BJ (cell line): ENCODE measurements at regions of chr4 and their contacts with region 1.

Region 1: DNA sequence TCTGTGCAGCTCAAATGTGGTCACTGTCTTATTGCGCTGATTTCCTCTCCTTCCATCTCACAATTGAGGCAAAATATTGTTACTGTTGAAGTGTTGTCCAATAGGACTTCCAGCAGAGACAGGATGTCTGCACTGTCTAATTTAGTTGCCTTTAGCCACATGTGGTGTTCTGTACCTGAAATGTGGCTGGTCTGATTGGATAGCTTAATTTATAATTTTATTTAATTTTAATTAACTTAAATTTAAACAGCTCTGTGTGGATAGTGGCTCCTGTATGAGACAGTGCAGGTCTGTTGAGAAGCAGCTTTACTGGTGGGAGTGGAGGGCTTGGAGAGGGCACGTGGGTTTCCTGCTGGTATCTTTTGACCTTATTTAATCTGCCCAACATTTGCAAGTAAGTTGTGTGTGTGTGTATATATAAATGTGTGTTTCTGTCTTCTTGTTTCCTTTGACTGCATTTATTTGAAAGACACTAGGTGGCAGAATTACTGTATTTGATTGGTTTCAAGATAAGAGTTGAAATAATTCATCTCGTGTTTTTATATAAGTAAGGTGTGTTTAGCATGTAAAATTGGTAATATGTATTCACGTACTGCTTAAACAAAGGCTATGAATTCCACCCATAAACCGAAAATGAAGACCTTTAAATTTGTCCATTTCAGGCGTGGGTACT is 55.3 kb upstream of the MSANTD1 start:
- DNase-seq: no peak
- H3K4me3 ChIP-seq: no peak overlapping the region
- H3K27me3 ChIP-seq: no peaks in the 10 kb centered on the region
- CTCF ChIP-seq: peak; percentile 33; the same call in 1 of the 2 replicates

Region 2: GRCh38 chr4:3176367-3177229 is 17.1 kb before region 1 on chr4:
- CTCF ChIA-PET with region 1: interaction called, 13 read pairs
- POLR2A ChIA-PET with region 1: no interaction called
- DNase-seq: no peak
- H3K4me3 ChIP-seq: no peak overlapping the region
- H3K27me3 ChIP-seq: no peaks in the 10 kb centered on the region
- CTCF ChIP-seq: no peak

Region 3: DNA sequence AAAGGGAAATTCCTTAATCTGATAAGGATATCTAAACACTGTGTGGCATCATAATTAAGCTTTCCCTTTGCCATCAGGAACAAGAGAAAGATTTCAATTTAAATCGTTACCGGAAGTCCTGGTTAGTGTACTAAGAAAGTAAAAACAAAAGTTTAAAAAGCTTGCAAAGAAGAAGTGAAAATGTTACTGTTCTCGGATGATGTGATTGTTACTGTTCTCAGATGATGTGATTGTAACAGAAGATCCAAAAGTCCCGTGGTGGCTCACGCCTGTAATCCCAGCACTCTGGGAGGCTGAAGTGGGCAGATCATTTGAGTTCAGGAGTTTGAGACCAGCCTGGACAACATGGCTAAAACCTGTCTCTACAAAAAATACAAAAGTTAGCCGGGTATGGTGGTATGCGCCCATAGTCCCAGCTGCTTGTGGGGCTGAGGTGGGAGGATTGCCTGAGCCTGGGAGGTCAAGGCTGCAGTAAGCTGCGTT is 161.6 kb after region 1 on chr4:
- CTCF ChIA-PET with region 1: no interaction called
- POLR2A ChIA-PET with region 1: no interaction called
- DNase-seq: no peak
- H3K4me3 ChIP-seq: no peak overlapping the region
- H3K27me3 ChIP-seq: no peaks in the 10 kb centered on the region
- CTCF ChIP-seq: no peak

Region 4: DNA sequence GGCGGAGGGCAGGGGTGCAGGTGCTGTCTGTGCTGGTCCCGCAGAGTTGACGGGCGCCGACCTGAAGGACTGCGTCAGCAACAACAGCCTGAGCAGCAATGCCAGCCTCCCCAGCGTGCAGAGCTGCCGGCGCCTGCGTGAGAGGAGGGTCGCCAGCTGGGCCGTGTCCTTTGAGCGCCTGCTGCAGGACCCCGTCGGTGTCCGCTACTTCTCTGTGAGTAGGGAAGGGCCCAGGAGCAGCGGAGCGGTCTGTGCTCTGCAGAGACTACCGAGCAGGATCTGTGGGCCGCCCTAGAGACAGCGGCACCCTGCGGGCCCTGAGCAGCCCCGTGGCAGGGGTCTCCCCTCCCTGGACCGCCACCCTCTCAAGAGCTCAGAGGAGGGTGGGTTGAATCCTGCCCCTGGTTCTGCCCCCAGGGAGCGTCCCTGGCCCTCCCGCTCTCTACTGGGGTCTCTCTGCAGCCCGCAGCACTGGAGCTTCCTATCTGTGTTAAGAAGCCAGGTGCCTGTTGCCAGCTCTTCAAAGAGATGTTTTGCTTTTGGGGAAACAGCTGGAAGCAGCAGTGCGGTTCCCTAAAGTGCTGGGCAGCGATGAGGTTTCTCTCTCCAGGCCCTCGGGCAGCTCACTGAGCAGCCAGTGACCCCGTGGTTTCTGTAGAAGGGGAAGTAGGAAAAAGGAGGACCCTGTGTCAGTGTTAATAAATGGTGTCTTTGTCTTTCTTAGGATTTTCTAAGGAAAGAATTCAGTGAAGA is 220.5 kb after region 1 on chr4:
- CTCF ChIA-PET with region 1: no interaction called
- POLR2A ChIA-PET with region 1: no interaction called
- DNase-seq: no peak
- H3K4me3 ChIP-seq: no peak overlapping the region
- H3K27me3 ChIP-seq: no peaks in the 10 kb centered on the region
- CTCF ChIP-seq: no peak